Activated CD8-positive, alpha-beta T cell treated with anti-CD3 and anti-CD28 coated beads for 36 hours (primary cell): ENCODE measurements at regions of chr17 and their contacts with region 1.

Region 1: GRCh38 chr17:77054936-77055335 is 85.8 kb upstream of the SEC14L1 start:
- DNase-seq: no peak
- ATAC-seq: no peak
- H3K4me3 Mint-ChIP-seq: no peak overlapping the region
- H3K27ac Mint-ChIP-seq: no peak overlapping the region
- H3K4me1 Mint-ChIP-seq: no peaks in the 10 kb centered on the region
- H3K27me3 Mint-ChIP-seq: peaks cover 1% of the 10 kb centered on the region
- CTCF ChIP-seq: no peak

Region 2: DNA sequence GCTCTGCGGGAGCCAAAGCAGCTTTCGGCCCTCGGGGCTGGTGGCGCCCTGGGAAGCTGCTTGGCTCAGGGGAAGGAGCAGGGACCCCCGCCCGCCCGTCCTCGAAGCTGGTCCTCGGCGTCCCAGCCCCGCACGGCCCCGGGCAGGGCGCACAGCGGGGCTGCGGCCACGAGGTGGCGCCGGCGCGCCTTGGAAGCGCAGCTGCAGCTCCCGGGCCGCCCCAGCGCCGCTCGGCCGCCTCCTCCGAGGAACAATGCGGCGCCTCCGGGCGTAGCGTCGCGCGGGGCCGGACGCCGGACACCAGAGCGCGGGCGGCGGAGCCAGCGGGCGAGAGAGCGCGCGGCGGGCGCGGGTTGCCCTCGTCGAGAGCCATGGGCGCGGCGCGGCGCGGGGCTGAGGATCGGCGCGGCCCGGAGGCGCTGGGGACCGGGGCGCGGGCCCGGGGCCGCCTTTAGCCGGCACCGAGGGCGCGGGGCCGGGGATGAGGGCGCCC is 186.7 kb before region 1 on chr17 and contains the start of gene MGAT5B:
- CTCF ChIA-PET with region 1: interaction called, 51 read pairs
- POLR2A ChIA-PET with region 1: no interaction called
- intact Hi-C with region 1: no loop called
- DNase-seq: peak; percentile 78
- ATAC-seq: peak; percentile 93
- H3K4me3 Mint-ChIP-seq: peak within 1 kb of the TSS; percentile 45
- H3K27ac Mint-ChIP-seq: no peak within 1 kb of the TSS
- H3K4me1 Mint-ChIP-seq: peaks cover 8% of the 10 kb centered on the region
- H3K27me3 Mint-ChIP-seq: peaks cover 12% of the 10 kb centered on the region
- CTCF ChIP-seq: peak; percentile 82
- total RNA-seq, gene MGAT5B: not detected

Region 3: GRCh38 chr17:77011173-77012011 is 43.5 kb before region 1 on chr17:
- CTCF ChIA-PET with region 1: interaction called, 23 read pairs
- POLR2A ChIA-PET with region 1: no interaction called
- intact Hi-C with region 1: no loop called
- DNase-seq: peak; percentile 82
- ATAC-seq: no peak
- H3K4me3 Mint-ChIP-seq: no peak overlapping the region
- H3K27ac Mint-ChIP-seq: no peak overlapping the region
- H3K4me1 Mint-ChIP-seq: no peaks in the 10 kb centered on the region
- H3K27me3 Mint-ChIP-seq: no peaks in the 10 kb centered on the region
- CTCF ChIP-seq: peak; percentile 80

Region 4: DNA sequence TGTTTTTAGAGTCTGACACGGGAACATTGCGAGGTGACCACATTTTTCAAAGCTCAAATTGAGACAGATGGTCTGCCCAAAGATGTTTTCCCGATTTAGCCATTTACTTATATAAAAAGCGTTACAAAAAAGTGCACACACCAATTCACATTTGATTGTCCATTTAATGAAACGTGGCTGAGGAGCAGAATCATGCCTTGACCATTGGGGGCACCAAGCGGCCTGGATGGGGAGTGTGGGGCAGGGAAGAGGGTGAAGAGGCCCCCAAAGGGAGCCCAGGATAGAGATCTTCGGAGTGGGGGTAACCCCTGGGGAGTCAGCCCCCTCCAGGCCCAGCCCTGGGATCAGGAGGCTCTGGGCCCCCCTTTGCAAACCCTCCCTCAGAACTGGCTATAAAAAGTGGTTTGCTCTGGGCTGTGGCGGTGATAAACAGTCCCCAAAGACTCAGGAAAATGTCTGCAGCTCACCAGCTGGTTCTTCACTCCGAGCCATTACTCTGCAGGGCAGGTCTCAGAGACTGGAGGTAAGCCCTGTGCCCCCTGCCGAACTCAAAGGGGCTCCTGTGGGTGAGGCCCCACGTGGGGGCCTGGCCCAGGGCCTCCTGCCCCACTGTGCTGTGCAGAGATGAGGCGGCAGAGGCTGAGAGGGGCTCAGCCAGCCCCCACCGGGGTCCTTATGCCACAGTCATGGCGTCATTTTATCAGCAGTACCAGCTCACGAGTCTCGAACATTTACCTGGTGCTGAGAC is 20.1 kb before region 1 on chr17:
- CTCF ChIA-PET with region 1: interaction called, 15 read pairs
- POLR2A ChIA-PET with region 1: no interaction called
- intact Hi-C with region 1: no loop called
- DNase-seq: no peak
- ATAC-seq: no peak
- H3K4me3 Mint-ChIP-seq: no peak overlapping the region
- H3K27ac Mint-ChIP-seq: no peak overlapping the region
- H3K4me1 Mint-ChIP-seq: no peaks in the 10 kb centered on the region
- H3K27me3 Mint-ChIP-seq: peaks cover 15% of the 10 kb centered on the region
- CTCF ChIP-seq: no peak

Region 5: DNA sequence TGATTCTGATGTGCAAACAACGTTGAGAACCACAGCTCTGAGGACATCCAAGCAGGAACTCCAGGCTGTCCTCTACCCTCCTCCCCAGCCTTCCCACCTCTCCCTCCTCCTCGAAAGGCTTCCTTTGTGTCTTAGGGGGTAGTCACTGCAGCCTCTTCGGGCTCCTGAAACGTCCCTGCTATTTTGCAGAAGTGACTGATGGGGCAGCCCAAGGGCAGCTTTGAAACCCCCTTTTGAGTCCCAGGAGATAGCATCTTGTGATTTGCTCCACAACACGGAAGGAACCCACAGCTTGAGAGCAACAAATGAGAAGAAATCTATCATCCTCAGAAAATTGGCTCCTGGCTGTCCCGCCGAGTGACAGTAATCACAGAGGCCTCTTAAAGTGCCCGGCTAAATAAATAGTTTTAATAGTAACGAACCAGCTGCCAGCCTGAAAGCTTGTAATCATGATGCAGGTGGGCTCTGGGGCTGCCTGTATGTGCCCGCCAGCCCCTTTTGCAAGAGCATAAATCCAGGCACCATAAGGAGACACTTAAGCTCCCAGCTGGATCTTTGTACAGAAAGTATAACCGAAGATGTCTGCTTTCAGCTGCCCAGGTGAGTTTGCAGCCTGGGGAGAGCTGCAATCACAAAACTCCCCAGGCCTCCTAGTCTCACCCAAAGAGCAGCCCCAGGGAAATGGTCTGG is 24.2 kb after region 1 on chr17:
- CTCF ChIA-PET with region 1: interaction called, 22 read pairs
- POLR2A ChIA-PET with region 1: no interaction called
- intact Hi-C with region 1: no loop called
- DNase-seq: no peak
- ATAC-seq: no peak
- H3K4me3 Mint-ChIP-seq: no peak overlapping the region
- H3K27ac Mint-ChIP-seq: no peak overlapping the region
- H3K4me1 Mint-ChIP-seq: no peaks in the 10 kb centered on the region
- H3K27me3 Mint-ChIP-seq: peaks cover 14% of the 10 kb centered on the region
- CTCF ChIP-seq: no peak